Left lung (tissue), 14 donors: ENCODE measurements at regions of chr11 and their contacts with region 1.

Region 1: DNA sequence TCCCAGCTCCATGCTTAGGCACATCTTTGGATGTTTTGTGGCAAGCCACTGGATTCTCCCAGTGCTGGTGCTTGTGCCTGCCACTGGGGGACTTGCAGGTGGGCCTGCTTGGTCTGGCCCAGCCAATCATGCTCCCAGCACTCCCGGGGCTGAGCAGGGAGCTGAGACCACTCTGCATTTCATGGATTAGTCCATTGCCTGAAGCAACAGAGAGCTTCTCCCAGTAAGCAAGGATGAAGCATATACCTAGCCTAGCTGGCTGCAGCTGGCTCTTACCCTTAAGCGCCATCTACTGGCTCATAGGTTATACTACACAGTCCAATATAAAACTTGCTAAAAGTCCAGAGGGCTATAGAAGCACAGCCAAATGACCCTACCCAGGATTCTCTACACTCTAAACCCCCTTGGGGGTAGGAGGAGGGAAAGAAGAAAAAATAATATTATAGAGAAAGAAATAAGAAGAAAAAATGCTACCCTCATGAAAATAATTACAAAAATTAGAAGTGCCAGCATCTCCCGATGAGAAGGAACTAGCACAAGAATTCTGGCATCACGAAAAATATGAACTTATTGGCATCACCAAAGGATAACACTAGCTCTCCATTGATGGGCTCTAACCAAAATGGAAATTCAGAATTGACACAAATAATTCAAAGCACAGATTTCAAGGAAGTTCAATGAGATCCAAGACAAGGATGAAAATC is 275.3 kb downstream of the C11orf87 start:
- DNase-seq: peak in 2 of 4 donors; percentile 21 to 29
- ATAC-seq: peak; percentile 96
- H3K4me3 ChIP-seq: no peak overlapping the region
- H3K27ac ChIP-seq: no peak overlapping the region
- H3K4me1 ChIP-seq: no peaks in the 10 kb centered on the region
- H3K27me3 ChIP-seq: no peaks in the 10 kb centered on the region
- CTCF ChIP-seq: peak; percentile 49 to 50

Region 2: GRCh38 chr11:108697872-108698473 is 999.3 kb before region 1 on chr11:
- intact Hi-C with region 1: loop called in 1 of 2 experiments (anchors 5 kb)
- DNase-seq: peak in 3 of 4 donors; percentile 42 to 78 (median 54)
- ATAC-seq: peak; percentile 95
- H3K4me3 ChIP-seq: no peak overlapping the region
- H3K27ac ChIP-seq: no peak overlapping the region
- H3K4me1 ChIP-seq: no peaks in the 10 kb centered on the region
- H3K27me3 ChIP-seq: no peaks in the 10 kb centered on the region
- CTCF ChIP-seq: peak; percentile 61 to 83

Region 3: GRCh38 chr11:109795234-109795633 is 97.9 kb after region 1 on chr11:
- intact Hi-C with region 1: no loop called
- DNase-seq: no peak
- ATAC-seq: no peak
- H3K4me3 ChIP-seq: no peak overlapping the region
- H3K27ac ChIP-seq: no peak overlapping the region
- H3K4me1 ChIP-seq: no peaks in the 10 kb centered on the region
- H3K27me3 ChIP-seq: no peaks in the 10 kb centered on the region
- CTCF ChIP-seq: no peak